ENCODE measurements at regions of chr16 and their contacts with region 1.

Region 1: GRCh38 chr16:69310653-69311532 is at the start of gene VPS4A:
- DNase-seq: peak; percentile 94 to 95
- H3K4me3 ChIP-seq: peak within 1 kb of the TSS; percentile 94 to 97 (median 94)
- H3K27ac ChIP-seq: peak within 1 kb of the TSS; percentile 87 to 90
- H3K4me1 ChIP-seq: no peaks in the 10 kb centered on the region
- H3K27me3 ChIP-seq: no peaks in the 10 kb centered on the region
- CTCF ChIP-seq: peak; percentile 42 to 92 (median 54)
- POLR2A ChIP-seq: no peak
- total RNA-seq, gene VPS4A: 31.3 to 43.8 (median 32.4) TPM

Region 2: DNA sequence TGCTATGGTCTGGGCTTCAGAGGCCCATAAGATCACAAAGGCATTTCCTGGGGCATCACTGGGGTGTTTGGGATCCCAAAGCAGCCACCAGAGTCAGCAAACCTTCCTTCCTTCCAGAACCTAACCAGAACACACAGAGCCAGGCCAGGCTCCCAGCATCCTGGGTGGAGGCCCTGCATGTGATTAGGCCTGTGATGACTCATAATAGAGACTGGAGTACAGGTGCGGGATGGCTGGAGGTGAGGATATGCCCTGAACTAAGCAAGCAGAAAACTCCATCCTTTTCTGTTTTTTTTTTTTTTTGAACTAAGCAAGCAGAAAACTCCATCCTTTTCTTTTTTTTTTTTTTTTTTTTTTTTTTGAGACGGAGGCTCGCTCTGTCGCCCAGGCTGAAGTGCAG is 1574.0 kb before region 1 on chr16:
- intact Hi-C with region 1: no loop called
- DNase-seq: no peak
- H3K4me3 ChIP-seq: no peak overlapping the region
- H3K27ac ChIP-seq: no peak overlapping the region
- H3K4me1 ChIP-seq: no peaks in the 10 kb centered on the region
- H3K27me3 ChIP-seq: no peaks in the 10 kb centered on the region
- CTCF ChIP-seq: no peak
- POLR2A ChIP-seq: no peak

Region 3: DNA sequence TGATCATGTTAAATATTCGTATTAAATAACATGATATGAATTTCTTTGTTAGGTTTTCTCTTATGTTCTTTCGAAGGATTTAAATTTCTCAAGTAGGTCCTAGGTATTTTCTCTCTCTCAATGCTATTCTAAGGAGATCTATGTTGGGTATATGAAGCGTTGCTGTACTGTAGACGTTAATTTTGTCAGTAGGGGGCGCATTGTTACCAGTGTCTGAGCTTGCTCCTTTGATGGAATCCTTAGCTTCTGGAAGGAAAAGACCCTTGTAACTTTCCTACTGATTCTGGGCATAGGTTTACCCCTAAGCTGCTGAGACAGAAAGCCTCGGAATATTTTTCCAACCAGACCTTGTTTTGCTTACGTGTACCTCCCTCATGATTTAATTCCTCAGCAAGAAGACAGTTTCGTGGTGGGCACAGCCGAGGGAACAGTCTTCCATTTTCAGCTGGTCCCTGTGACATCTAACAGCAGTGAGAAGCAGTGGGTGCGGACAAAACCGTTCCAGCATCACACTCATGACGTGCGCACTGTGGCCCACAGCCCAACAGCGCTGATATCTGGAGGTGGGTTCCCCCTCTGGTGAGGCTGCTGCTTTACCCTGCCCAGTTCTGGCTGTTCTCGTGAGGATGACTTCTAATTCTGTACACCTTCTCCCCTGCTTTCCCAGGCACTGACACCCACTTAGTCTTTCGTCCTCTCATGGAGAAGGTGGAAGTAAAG is 160.6 kb before region 1 on chr16:
- intact Hi-C with region 1: loop called (anchors 10 kb)
- DNase-seq: no peak
- H3K4me3 ChIP-seq: no peak overlapping the region
- H3K27ac ChIP-seq: peak overlapping the region in 1 of 2 donors; percentile 19
- H3K4me1 ChIP-seq: no peaks in the 10 kb centered on the region
- H3K27me3 ChIP-seq: no peaks in the 10 kb centered on the region
- CTCF ChIP-seq: peak; percentile 75 to 83 (median 76)
- POLR2A ChIP-seq: no peak